ENCODE measurements at regions of chr1 and their contacts with region 1.

Region 1: GRCh38 chr1:231806623-231807495 is 180.3 kb downstream of the DISC1 start:
- DNase-seq: no peak
- ATAC-seq: peak; percentile 90
- H3K4me3 ChIP-seq: no peak overlapping the region
- H3K27ac ChIP-seq: no peak overlapping the region
- H3K4me1 ChIP-seq: no peaks in the 10 kb centered on the region
- H3K27me3 ChIP-seq: no peaks in the 10 kb centered on the region
- CTCF ChIP-seq: peak; percentile 59

Region 2: GRCh38 chr1:231757101-231757404 is 49.8 kb before region 1 on chr1:
- CTCF ChIA-PET with region 1: interaction called, 4 read pairs
- POLR2A ChIA-PET with region 1: no interaction called
- in situ Hi-C with region 1: no loop called
- intact Hi-C with region 1: loop called (anchors 5 kb)
- DNase-seq: no peak
- ATAC-seq: peak; percentile 63
- H3K4me3 ChIP-seq: no peak overlapping the region
- H3K27ac ChIP-seq: no peak overlapping the region
- H3K4me1 ChIP-seq: no peaks in the 10 kb centered on the region
- H3K27me3 ChIP-seq: no peaks in the 10 kb centered on the region; the same call in 1 of the 2 replicates
- CTCF ChIP-seq: no peak; the same call in none of the 2 replicates